ENCODE measurements at regions of chr18 and their contacts with region 1.

Region 1: DNA sequence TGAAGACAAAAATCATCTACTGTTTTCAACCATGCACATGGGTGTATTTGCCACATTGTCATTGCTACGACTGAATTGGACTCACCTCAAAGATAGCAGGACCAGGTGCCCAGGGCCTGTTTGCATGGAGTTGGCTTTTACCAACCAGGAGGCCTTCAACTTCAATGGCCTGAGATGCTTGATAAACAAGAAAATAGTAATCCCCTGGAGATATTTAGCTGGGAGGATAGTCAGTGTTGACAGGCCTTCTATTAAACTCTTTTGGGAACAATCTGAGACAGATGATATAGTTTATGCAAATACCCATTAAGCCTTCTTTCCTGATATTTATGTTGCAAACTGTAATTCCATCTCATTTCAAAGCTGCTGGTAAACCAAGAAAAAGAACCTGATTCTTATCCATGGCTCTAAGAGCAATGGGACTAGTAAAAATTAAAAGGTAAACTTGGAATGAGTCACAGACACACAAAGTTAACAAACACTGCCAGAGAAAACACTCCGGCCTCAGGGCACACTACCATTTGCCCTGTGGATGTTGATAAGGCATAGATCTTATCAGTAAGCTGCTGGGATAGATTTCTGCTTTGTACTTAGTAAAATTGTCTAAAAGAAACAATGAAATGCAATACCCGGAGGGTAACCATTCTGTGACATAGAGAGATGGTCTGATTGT is 13.0 kb downstream of the GALR1 start:
- DNase-seq: no peak
- ATAC-seq: no peak
- H3K4me3 ChIP-seq: no peak overlapping the region
- H3K4me3 Mint-ChIP-seq: no peak overlapping the region
- H3K27ac ChIP-seq: no peak overlapping the region
- H3K27ac Mint-ChIP-seq: no peak overlapping the region
- H3K4me1 ChIP-seq: no peaks in the 10 kb centered on the region
- H3K4me1 Mint-ChIP-seq: no peaks in the 10 kb centered on the region
- H3K27me3 ChIP-seq: peaks cover 0 to 19% of the 10 kb centered on the region in 2 experiments
- H3K27me3 Mint-ChIP-seq: peaks cover 20 to 25% of the 10 kb centered on the region in 2 donors

Region 2: GRCh38 chr18:77249569-77250500 is 12.8 kb before region 1 on chr18 and contains the start of gene GALR1:
- CTCF ChIA-PET with region 1: no interaction called
- POLR2A ChIA-PET with region 1: interaction called in 1 of 2 experiments, 10 read pairs
- DNase-seq: no peak
- ATAC-seq: peak in 2 of 4 experiments; percentile 41 to 56
- H3K4me3 ChIP-seq: peak within 1 kb of the TSS in 1 of 2 donors; percentile 2
- H3K4me3 Mint-ChIP-seq: peak within 1 kb of the TSS; percentile 38 to 70 (median 67)
- H3K27ac ChIP-seq: no peak within 1 kb of the TSS
- H3K27ac Mint-ChIP-seq: no peak within 1 kb of the TSS
- H3K4me1 ChIP-seq: peaks cover 0 to 25% of the 10 kb centered on the region in 2 experiments
- H3K4me1 Mint-ChIP-seq: peaks cover 14 to 19% (median 17%) of the 10 kb centered on the region in 3 donors
- H3K27me3 ChIP-seq: peaks cover 22 to 48% of the 10 kb centered on the region in 2 experiments
- H3K27me3 Mint-ChIP-seq: peaks cover 50 to 61% of the 10 kb centered on the region in 2 donors
- total RNA-seq, gene GALR1: not detected

Region 3: DNA sequence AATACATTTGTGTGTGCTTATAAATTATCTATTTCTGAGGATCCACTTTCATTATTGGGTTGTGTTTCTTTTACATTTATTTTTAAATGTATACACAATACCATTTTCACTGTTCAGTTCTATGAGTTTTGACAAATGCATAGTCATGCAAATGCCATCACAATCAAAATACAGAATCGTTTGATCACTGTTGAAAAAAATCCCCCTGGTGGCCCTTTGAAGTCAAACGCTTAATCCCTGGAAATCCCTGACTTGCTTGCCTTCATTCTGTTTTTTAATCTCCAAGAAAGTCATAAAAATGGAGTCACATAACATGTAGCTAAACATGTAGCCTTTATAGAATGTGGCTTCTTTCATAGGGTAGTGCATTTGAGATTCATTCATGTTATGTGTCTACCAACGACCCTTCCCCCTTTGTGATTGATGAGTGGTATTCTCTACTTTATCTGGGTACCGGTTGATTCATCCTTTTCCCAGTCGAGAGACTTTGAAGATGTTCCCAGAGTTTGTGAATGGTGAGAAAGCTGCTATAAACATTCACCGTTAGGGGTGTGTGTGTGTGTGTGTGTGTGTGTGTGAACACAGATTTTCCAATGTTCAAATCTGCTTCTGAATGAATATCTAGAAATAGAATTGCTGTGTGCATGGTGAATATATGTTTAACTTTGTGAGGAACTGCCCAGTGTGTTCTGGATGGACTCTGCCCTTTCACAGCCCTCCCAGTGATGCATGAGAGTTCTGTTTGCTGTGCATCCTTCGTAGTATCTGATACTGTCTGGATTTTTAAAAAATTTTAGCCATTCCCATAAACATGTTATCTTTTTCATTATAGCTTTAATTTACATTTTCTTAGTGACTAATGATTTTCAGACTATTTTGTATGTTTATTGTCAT is 160.6 kb after region 1 on chr18:
- CTCF ChIA-PET with region 1: no interaction called
- POLR2A ChIA-PET with region 1: no interaction called
- DNase-seq: no peak
- ATAC-seq: no peak
- H3K4me3 ChIP-seq: no peak overlapping the region
- H3K4me3 Mint-ChIP-seq: no peak overlapping the region
- H3K27ac ChIP-seq: no peak overlapping the region
- H3K27ac Mint-ChIP-seq: no peak overlapping the region
- H3K4me1 ChIP-seq: no peaks in the 10 kb centered on the region
- H3K4me1 Mint-ChIP-seq: no peaks in the 10 kb centered on the region
- H3K27me3 ChIP-seq: peaks cover 0 to 2% of the 10 kb centered on the region in 2 experiments
- H3K27me3 Mint-ChIP-seq: peaks cover 5 to 16% of the 10 kb centered on the region in 2 donors